Common myeloid progenitor, CD34-positive (primary cell): ENCODE measurements at regions of chr1 and their contacts with region 1.

Region 1: GRCh38 chr1:224168859-224169380 is 14.1 kb upstream of the DEGS1 start:
- DNase-seq: peak; percentile 78 to 94 (median 92)
- H3K4me3 ChIP-seq: peak overlapping the region in 2 of 7 experiments; percentile 25 to 56
- H3K27ac ChIP-seq: no peak overlapping the region
- H3K4me1 ChIP-seq: peaks cover 8 to 21% (median 17%) of the 10 kb centered on the region in 4 experiments
- H3K27me3 ChIP-seq: no peaks in the 10 kb centered on the region

Region 2: GRCh38 chr1:224182866-224183590 is 14.1 kb after region 1 on chr1 and contains the start of gene DEGS1:
- CTCF ChIA-PET with region 1: interaction called, 15 read pairs
- POLR2A ChIA-PET with region 1: interaction called, 3 read pairs
- DNase-seq: peak; percentile 90 to 94 (median 92)
- H3K4me3 ChIP-seq: peak within 1 kb of the TSS; percentile 75 to 96 (median 90)
- H3K27ac ChIP-seq: peak within 1 kb of the TSS; percentile 85 to 91
- H3K4me1 ChIP-seq: peaks cover 6 to 27% (median 20%) of the 10 kb centered on the region in 4 experiments
- H3K27me3 ChIP-seq: no peaks in the 10 kb centered on the region